Activated naive CD4-positive, alpha-beta T cell treated with anti-CD3 and anti-CD28 coated beads for 36 hours (primary cell): ENCODE measurements at regions of chr1 and their contacts with region 1.

Region 1: DNA sequence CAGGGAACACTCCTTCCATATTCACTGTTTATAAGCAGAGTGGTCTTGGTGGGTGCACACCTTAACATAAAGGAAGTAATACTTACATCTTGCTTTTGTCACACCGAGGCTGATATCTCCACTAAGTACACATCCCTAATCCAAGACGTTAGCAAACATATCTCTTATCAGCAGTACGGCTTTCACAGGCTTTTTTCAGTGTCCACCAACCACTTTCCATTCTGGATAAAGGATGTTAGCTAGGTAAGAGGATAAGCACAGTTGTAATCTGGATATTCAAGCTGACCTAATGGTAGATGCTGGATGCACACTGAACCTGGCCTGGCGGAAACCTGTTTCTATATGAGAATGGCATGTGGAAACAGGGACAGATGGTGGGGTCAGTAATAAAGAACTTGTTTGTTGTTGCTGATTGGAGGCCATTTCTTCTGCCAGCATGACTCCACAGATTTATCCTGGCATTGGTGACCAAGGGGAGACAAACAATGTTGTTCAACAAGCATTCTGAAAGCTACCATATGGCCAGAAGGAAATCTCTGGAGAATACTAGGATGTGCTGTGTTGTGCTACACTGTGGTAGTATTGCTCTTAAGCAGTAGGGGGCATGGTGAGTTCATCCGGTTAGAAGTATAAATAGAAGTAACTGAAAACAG is 416.4 kb downstream of the PTBP2 start:
- DNase-seq: peak; percentile 38
- H3K4me3 Mint-ChIP-seq: no peak overlapping the region
- H3K27ac Mint-ChIP-seq: no peak overlapping the region
- H3K4me1 Mint-ChIP-seq: no peaks in the 10 kb centered on the region
- H3K27me3 Mint-ChIP-seq: no peaks in the 10 kb centered on the region

Region 2: DNA sequence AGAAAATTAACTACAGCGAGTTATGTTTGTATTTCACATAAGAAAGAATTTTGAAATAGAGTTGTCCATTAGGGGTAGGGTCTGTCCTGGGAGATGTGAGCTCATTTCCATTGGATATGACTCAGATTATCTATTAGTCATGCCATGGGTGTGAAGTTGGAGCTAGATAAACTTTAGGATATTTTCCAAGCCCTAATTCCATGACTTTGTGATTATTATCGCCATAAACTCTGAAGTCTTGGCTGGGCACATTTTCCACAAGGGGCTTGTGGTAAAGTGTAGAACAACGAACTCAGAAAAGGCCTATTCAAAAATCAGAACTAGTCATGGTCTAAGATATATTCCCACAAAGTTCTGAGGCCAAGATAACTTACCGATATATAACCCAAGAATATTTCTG is 386.2 kb after region 1 on chr1:
- CTCF ChIA-PET with region 1: no interaction called
- intact Hi-C with region 1: loop called (anchors 1 kb)
- DNase-seq: no peak
- H3K4me3 Mint-ChIP-seq: no peak overlapping the region
- H3K27ac Mint-ChIP-seq: no peak overlapping the region
- H3K4me1 Mint-ChIP-seq: no peaks in the 10 kb centered on the region
- H3K27me3 Mint-ChIP-seq: no peaks in the 10 kb centered on the region

Region 3: GRCh38 chr1:97806996-97807520 is 669.1 kb after region 1 on chr1:
- CTCF ChIA-PET with region 1: no interaction called
- intact Hi-C with region 1: no loop called
- DNase-seq: no peak
- H3K4me3 Mint-ChIP-seq: no peak overlapping the region
- H3K27ac Mint-ChIP-seq: no peak overlapping the region
- H3K4me1 Mint-ChIP-seq: peaks cover 9% of the 10 kb centered on the region
- H3K27me3 Mint-ChIP-seq: no peaks in the 10 kb centered on the region